ENCODE measurements at regions of chr3 and their contacts with region 1.

Region 1: DNA sequence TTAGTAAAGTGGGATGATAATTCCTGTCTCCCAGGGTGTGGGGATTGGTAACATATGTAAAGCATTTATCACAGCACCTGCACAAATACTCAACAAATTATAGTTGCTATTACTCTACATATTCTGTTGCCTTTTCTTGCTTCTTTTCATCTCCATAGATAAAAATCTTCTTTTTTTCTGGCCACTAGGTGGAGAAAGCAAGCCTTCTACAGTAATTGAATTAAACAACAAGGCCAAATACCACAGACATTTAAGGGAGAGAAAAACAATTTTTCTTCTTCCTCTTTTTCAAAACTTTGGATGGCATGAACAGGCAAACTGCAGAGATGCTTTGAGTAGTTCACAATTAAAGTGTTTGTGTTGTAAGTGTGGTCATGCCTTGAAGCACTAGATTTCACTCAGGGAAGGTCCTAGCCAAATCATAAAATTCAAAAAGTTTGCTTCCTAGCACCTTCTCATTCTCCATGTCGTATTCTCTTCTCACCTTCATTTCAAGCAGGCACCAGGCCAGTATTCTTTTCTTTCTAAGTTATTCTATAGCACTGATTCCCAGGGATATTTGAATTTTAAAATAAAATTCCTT is 493.4 kb upstream of the TGFBR2 start:
- DNase-seq: peak in 1 of 2 experiments; percentile 33
- H3K4me3 ChIP-seq: no peak overlapping the region
- H3K4me3 Mint-ChIP-seq: no peak overlapping the region
- H3K27ac Mint-ChIP-seq: no peak overlapping the region
- H3K4me1 ChIP-seq: peaks cover 12% of the 10 kb centered on the region
- H3K4me1 Mint-ChIP-seq: peaks cover 21% of the 10 kb centered on the region
- H3K27me3 ChIP-seq: no peaks in the 10 kb centered on the region
- H3K27me3 Mint-ChIP-seq: no peaks in the 10 kb centered on the region
- CTCF ChIP-seq: peak; percentile 45 to 52

Region 2: GRCh38 chr3:30012941-30013543 is 100.0 kb before region 1 on chr3:
- CTCF ChIA-PET with region 1: no interaction called
- POLR2A ChIA-PET with region 1: no interaction called
- intact Hi-C with region 1: loop called (anchors 1 kb)
- DNase-seq: peak; percentile 71 to 76
- H3K4me3 ChIP-seq: no peak overlapping the region
- H3K4me3 Mint-ChIP-seq: no peak overlapping the region
- H3K27ac Mint-ChIP-seq: no peak overlapping the region
- H3K4me1 ChIP-seq: no peaks in the 10 kb centered on the region
- H3K4me1 Mint-ChIP-seq: no peaks in the 10 kb centered on the region
- H3K27me3 ChIP-seq: no peaks in the 10 kb centered on the region
- H3K27me3 Mint-ChIP-seq: no peaks in the 10 kb centered on the region
- CTCF ChIP-seq: peak; percentile 64 to 66

Region 3: GRCh38 chr3:30042274-30042859 is 70.6 kb before region 1 on chr3:
- CTCF ChIA-PET with region 1: no interaction called
- POLR2A ChIA-PET with region 1: no interaction called
- intact Hi-C with region 1: loop called (anchors 1 kb)
- DNase-seq: peak; percentile 69 to 72
- H3K4me3 ChIP-seq: no peak overlapping the region
- H3K4me3 Mint-ChIP-seq: no peak overlapping the region
- H3K27ac Mint-ChIP-seq: no peak overlapping the region
- H3K4me1 ChIP-seq: peaks cover 10% of the 10 kb centered on the region; the same call in 1 of the 2 replicates
- H3K4me1 Mint-ChIP-seq: no peaks in the 10 kb centered on the region
- H3K27me3 ChIP-seq: no peaks in the 10 kb centered on the region
- H3K27me3 Mint-ChIP-seq: no peaks in the 10 kb centered on the region
- CTCF ChIP-seq: peak; percentile 76 to 86

Region 4: DNA sequence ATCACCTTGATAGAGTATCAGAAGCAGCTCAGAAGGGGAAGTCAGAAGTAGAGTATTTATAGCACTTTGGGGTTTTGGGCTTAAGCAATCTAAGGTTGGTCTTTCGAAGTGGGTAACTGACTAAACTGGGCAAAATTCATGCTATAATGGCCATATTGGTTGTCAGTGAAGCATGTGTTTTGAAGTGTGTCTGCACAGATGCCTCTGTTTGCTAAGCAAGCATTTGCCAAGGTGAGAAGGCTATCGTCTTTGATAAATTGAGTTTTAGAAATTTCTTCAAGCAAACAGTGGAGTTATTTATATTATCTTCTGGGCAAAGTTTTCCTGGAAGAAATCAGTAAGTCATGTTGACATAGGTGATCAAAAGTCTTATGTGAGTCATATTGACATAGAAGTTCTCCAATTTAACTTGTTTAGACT is 80.6 kb after region 1 on chr3:
- CTCF ChIA-PET with region 1: interaction called, 3 read pairs
- POLR2A ChIA-PET with region 1: no interaction called
- intact Hi-C with region 1: loop called (anchors 1 kb)
- DNase-seq: peak; percentile 53 to 60
- H3K4me3 ChIP-seq: no peak overlapping the region
- H3K4me3 Mint-ChIP-seq: no peak overlapping the region
- H3K27ac Mint-ChIP-seq: peak overlapping the region; percentile 5
- H3K4me1 ChIP-seq: peaks cover 34% of the 10 kb centered on the region
- H3K4me1 Mint-ChIP-seq: peaks cover 16% of the 10 kb centered on the region
- H3K27me3 ChIP-seq: no peaks in the 10 kb centered on the region
- H3K27me3 Mint-ChIP-seq: no peaks in the 10 kb centered on the region
- CTCF ChIP-seq: no peak

Region 5: GRCh38 chr3:30199096-30199759 is 86.2 kb after region 1 on chr3:
- CTCF ChIA-PET with region 1: interaction called, 4 read pairs
- POLR2A ChIA-PET with region 1: no interaction called
- intact Hi-C with region 1: loop called (anchors 1 kb)
- DNase-seq: peak; percentile 59 to 72
- H3K4me3 ChIP-seq: no peak overlapping the region
- H3K4me3 Mint-ChIP-seq: no peak overlapping the region
- H3K27ac Mint-ChIP-seq: no peak overlapping the region
- H3K4me1 ChIP-seq: peaks cover 34% of the 10 kb centered on the region
- H3K4me1 Mint-ChIP-seq: peaks cover 19% of the 10 kb centered on the region
- H3K27me3 ChIP-seq: no peaks in the 10 kb centered on the region
- H3K27me3 Mint-ChIP-seq: no peaks in the 10 kb centered on the region
- CTCF ChIP-seq: peak; percentile 68 to 72

Region 6: DNA sequence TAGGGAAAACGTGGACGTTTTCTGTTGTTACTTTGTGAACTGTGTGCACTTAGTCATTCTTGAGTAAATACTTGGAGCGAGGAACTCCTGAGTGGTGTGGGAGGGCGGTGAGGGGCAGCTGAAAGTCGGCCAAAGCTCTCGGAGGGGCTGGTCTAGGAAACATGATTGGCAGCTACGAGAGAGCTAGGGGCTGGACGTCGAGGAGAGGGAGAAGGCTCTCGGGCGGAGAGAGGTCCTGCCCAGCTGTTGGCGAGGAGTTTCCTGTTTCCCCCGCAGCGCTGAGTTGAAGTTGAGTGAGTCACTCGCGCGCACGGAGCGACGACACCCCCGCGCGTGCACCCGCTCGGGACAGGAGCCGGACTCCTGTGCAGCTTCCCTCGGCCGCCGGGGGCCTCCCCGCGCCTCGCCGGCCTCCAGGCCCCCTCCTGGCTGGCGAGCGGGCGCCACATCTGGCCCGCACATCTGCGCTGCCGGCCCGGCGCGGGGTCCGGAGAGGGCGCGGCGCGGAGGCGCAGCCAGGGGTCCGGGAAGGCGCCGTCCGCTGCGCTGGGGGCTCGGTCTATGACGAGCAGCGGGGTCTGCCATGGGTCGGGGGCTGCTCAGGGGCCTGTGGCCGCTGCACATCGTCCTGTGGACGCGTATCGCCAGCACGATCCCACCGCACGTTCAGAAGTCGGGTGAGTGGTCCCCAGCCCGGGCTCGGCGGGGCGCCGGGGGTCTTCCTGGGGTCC is 493.5 kb after region 1 on chr3 and contains the start of gene TGFBR2:
- CTCF ChIA-PET with region 1: no interaction called
- POLR2A ChIA-PET with region 1: no interaction called
- intact Hi-C with region 1: loop called (anchors 5 kb)
- DNase-seq: peak; percentile 94 to 98
- H3K4me3 ChIP-seq: peak within 1 kb of the TSS; percentile 68
- H3K4me3 Mint-ChIP-seq: peak within 1 kb of the TSS; percentile 90
- H3K27ac Mint-ChIP-seq: peak within 1 kb of the TSS; percentile 83
- H3K4me1 ChIP-seq: peaks cover 58% of the 10 kb centered on the region
- H3K4me1 Mint-ChIP-seq: peaks cover 34% of the 10 kb centered on the region
- H3K27me3 ChIP-seq: no peaks in the 10 kb centered on the region
- H3K27me3 Mint-ChIP-seq: no peaks in the 10 kb centered on the region
- CTCF ChIP-seq: peak in 1 of 2 experiments; percentile 11
- total RNA-seq, gene TGFBR2: 40.5 and 41.9 TPM in 2 replicates

Region 7: GRCh38 chr3:30751610-30752299 is 638.8 kb after region 1 on chr3:
- CTCF ChIA-PET with region 1: interaction called, 5 read pairs
- POLR2A ChIA-PET with region 1: no interaction called
- intact Hi-C with region 1: loop called (anchors 1 kb)
- DNase-seq: peak; percentile 51 to 58
- H3K4me3 ChIP-seq: no peak overlapping the region
- H3K4me3 Mint-ChIP-seq: no peak overlapping the region
- H3K27ac Mint-ChIP-seq: no peak overlapping the region
- H3K4me1 ChIP-seq: peaks cover 17% of the 10 kb centered on the region
- H3K4me1 Mint-ChIP-seq: peaks cover 15% of the 10 kb centered on the region
- H3K27me3 ChIP-seq: no peaks in the 10 kb centered on the region
- H3K27me3 Mint-ChIP-seq: no peaks in the 10 kb centered on the region
- CTCF ChIP-seq: peak; percentile 36 to 43

Measured in Caco-2 (cell line).